SK-N-SH (cell line): ENCODE measurements at regions of chr2 and their contacts with region 1.

Region 1: DNA sequence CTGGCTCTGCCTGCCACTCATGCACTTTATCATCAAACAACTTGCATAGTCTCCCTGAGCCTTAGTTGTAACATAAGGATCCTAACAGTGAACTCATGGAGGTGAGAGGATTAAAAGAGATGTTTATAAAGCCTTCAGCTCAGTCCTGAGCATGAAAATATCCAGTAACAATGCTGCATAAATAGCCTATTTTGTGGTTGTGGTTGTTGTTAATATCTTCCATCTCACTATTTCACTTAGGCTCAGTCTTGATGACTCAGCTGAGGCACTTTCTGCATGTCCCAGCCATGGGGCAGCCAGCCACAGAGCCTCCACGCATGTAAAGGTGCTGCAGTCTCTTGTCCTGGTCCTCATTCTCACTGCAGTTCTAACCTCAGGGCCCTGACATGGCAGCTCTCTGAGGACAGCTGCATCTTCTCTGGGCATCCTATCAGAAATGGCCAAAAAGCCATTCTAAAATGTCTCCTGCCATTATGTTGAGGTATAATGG is 218.8 kb upstream of the PKDCC start:
- DNase-seq: no peak
- H3K4me3 ChIP-seq: no peak overlapping the region
- H3K27ac ChIP-seq: no peak overlapping the region
- H3K4me1 ChIP-seq: no peaks in the 10 kb centered on the region
- H3K27me3 ChIP-seq: 0 out of 2 replicates have a peak, but pooled peaks cover 6% of the 10 kb centered on the region
- CTCF ChIP-seq: no peak
- EP300 ChIP-seq: no peak
- RAD21 ChIP-seq: no peak

Region 2: GRCh38 chr2:41791523-41791922 is 37.5 kb before region 1 on chr2:
- CTCF ChIA-PET with region 1: no interaction called
- POLR2A ChIA-PET with region 1: no interaction called
- DNase-seq: no peak
- H3K4me3 ChIP-seq: no peak overlapping the region
- H3K27ac ChIP-seq: no peak overlapping the region
- H3K4me1 ChIP-seq: no peaks in the 10 kb centered on the region
- H3K27me3 ChIP-seq: no peaks in the 10 kb centered on the region
- CTCF ChIP-seq: no peak
- EP300 ChIP-seq: no peak
- RAD21 ChIP-seq: no peak

Region 3: GRCh38 chr2:41840702-41841551 is 11.9 kb after region 1 on chr2:
- CTCF ChIA-PET with region 1: interaction called, 44 read pairs
- POLR2A ChIA-PET with region 1: no interaction called
- DNase-seq: peak; percentile 96
- H3K4me3 ChIP-seq: peak overlapping the region; percentile 79 to 98
- H3K27ac ChIP-seq: peak overlapping the region; percentile 9 to 91; a peak in 3 of 4 replicates
- H3K4me1 ChIP-seq: peaks cover 0 to 10% of the 10 kb centered on the region in 2 experiments; a peak in 2 of 4 replicates
- H3K27me3 ChIP-seq: no peaks in the 10 kb centered on the region; the same call in 1 of the 2 replicates
- CTCF ChIP-seq: peak; percentile 99
- EP300 ChIP-seq: peak in 1 of 2 experiments; percentile 40; a peak in 1 of 4 replicates
- RAD21 ChIP-seq: peak; percentile 90

Region 4: DNA sequence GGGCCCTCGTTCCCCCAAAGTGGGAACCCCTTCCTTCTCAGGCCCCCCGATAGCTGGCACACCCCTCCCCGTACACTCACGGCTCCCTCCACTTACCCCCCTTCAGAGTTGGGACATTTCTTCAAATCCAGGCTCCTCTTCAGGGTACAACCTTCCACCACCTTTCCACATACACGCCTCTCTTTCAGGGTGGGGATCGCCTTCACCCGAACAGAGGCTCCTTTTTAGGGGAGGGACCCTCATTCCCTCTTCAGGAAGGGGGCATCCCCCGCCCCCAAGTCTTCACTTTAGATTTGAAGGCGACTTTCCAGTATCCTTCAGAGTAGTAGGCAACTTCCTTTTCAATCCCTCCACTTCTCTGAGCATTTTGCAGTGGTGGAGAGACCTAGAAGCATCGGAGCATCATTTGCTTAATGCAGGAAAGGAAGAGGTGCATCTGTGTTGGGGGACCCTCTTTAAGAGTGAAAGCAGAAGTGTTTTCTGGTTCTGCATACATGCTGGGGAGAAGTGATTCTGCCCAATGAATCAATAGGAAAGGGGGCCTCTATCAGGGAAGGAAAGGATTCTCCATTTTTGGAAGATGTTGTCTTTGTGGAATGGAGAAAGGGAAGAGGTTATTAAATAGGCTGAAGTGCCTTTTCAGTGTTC is 340.9 kb after region 1 on chr2:
- CTCF ChIA-PET with region 1: no interaction called
- POLR2A ChIA-PET with region 1: no interaction called
- DNase-seq: peak; percentile 34
- H3K4me3 ChIP-seq: peak overlapping the region; percentile 81 to 100
- H3K27ac ChIP-seq: peak overlapping the region; percentile 72 to 92
- H3K4me1 ChIP-seq: peaks cover 16 to 23% of the 10 kb centered on the region in 2 experiments; a peak in 3 of 4 replicates
- H3K27me3 ChIP-seq: no peaks in the 10 kb centered on the region
- CTCF ChIP-seq: no peak
- EP300 ChIP-seq: no peak
- RAD21 ChIP-seq: no peak